Spleen (tissue), 13 donors: ENCODE measurements at regions of chr2 and their contacts with region 1.

Region 1: GRCh38 chr2:227238238-227239237 is 74.1 kb downstream of the COL4A3 start:
- DNase-seq: peak; percentile 83
- H3K4me3 ChIP-seq: no peak overlapping the region
- H3K27ac ChIP-seq: no peak overlapping the region
- H3K4me1 ChIP-seq: no peaks in the 10 kb centered on the region
- H3K27me3 ChIP-seq: no peaks in the 10 kb centered on the region
- CTCF ChIP-seq: peak; percentile 68 to 95 (median 86)
- POLR2A ChIP-seq: no peak

Region 2: GRCh38 chr2:227130636-227131035 is 107.9 kb before region 1 on chr2:
- intact Hi-C with region 1: loop called (anchors 2 kb)
- DNase-seq: no peak
- H3K4me3 ChIP-seq: no peak overlapping the region
- H3K27ac ChIP-seq: no peak overlapping the region
- H3K4me1 ChIP-seq: no peaks in the 10 kb centered on the region
- H3K27me3 ChIP-seq: peaks cover 0 to 6% (median 0%) of the 10 kb centered on the region in 7 donors
- CTCF ChIP-seq: no peak
- POLR2A ChIP-seq: no peak